Activated naive CD4-positive, alpha-beta T cell treated with anti-CD3 and anti-CD28 coated beads, Interleukin-2, amount 10 ng/mL, durations not matched to agents 7 days and 5 days (primary cell): ENCODE measurements at regions of chr7 and their contacts with region 1.

Region 1: DNA sequence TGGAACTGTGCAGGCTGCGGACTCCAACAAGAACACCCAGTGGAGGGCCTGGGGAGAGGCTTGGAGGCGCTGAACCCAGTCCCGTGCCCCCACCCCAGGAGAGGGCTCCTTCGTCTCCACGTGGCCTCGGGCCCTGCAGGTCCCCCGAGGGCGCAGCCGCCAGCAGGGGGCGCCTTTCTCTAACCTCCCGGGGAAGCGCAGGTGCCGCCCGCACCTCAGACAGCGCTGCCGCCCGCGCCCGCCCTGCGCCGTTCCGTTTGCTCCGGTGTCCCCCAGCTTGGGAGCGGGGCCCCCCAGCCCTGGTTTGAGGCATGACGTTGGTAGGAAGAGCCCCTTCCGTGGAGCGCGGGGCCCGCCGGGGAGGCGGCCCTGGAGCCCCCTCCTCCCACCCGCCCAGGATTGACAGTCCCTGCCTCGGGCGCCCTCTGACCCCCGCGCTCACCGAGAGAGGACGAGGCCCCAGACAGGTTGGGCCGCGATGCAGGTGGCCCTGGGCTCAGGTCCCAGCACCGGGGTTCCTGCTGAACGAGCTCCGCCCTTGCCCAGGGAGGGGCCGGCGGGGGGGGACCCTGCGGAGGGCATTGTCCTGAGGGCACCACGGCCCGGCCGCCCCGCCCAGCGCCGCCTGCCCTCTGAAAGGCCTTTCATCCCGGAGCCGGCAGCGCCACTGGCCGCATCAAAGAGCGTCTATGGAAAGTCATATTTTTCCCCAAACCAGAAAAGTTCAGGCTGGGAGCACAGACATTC is 42.8 kb downstream of the FOXL3 start:
- DNase-seq: peak; percentile 91
- H3K4me3 Mint-ChIP-seq: no peak overlapping the region
- H3K27ac Mint-ChIP-seq: no peak overlapping the region
- H3K4me1 Mint-ChIP-seq: peaks cover 8% of the 10 kb centered on the region
- H3K27me3 Mint-ChIP-seq: peaks cover 19% of the 10 kb centered on the region

Region 2: GRCh38 chr7:636396-636795 is 303.6 kb after region 1 on chr7:
- CTCF ChIA-PET with region 1: interaction called, 18 read pairs
- DNase-seq: peak; percentile 54
- H3K4me3 Mint-ChIP-seq: no peak overlapping the region
- H3K27ac Mint-ChIP-seq: peak overlapping the region; percentile 28
- H3K4me1 Mint-ChIP-seq: peaks cover 21% of the 10 kb centered on the region
- H3K27me3 Mint-ChIP-seq: no peaks in the 10 kb centered on the region